Heart left ventricle (tissue), 16 donors: ENCODE measurements at regions of chr17 and their contacts with region 1.

Region 1: DNA sequence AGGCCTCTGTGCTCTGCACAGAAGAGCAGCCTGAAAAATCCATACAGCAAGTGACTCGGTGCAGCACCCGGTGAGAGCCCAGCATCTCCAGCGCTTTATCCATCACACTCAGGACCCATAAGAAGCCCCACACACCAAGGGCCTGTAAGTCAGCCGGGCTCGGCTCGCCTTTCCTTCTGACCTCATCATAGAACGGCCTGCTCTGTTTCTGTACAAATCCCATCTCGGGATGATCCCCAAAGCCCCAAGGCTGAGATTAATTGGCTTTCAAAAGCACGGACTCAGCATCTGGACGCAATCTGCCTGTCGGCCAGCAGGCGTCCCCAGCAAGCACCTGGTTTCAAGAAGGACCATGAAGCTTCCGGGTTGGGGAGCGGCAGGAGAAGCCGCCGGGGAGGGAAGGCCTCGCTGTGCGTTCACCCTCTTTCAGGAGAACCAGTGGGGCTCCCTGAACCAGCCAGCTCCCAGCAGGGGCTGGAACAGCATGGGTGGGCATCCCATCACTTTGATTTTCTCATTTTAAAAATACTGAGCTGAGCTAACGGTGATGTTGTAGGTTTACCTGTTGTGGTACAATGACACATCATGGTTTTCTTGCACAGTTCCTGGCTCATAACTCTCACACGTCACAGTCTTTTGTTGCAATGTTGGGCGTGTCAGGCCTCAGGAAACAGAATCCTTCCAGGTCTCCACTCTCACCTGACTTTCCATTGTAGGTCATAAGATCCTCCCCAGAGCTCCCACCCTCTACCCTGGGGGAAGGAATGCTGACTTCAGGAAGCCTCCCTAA is 6.7 kb downstream of the CCDC57 start:
- DNase-seq: peak; percentile 81 to 91 (median 84)
- ATAC-seq: peak; percentile 57 to 87 (median 86)
- H3K4me3 ChIP-seq: peak overlapping the region in 7 of 12 donors; percentile 11 to 41 (median 17)
- H3K27ac ChIP-seq: peak overlapping the region in 11 of 12 donors; percentile 15 to 86 (median 48)
- H3K4me1 ChIP-seq: peaks cover 0 to 19% (median 8%) of the 10 kb centered on the region in 12 donors
- H3K27me3 ChIP-seq: no peaks in the 10 kb centered on the region
- CTCF ChIP-seq: peak; percentile 79 to 95 (median 92)
- POLR2A ChIP-seq: no peak

Region 2: DNA sequence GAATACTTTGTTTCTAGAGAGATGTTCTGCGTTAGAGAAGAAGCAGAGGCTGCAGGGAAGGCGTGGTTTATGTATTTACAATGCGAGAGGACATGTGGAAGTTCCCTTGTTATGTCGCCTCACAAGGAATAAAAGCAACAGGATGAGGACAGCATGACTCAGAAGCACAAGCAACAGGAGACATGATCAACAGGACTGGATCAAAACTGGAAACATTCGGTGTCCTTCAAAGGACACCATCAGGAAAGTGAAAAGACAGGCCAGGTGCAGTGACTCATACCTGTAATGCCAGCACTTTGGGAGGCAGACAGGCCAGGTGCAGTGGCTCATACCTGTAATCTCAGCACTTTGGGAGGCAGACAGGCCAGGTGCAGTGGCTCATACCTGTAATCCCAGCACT is 45.8 kb before region 1 on chr17:
- intact Hi-C with region 1: no loop called
- DNase-seq: no peak
- ATAC-seq: no peak
- H3K4me3 ChIP-seq: no peak overlapping the region
- H3K27ac ChIP-seq: no peak overlapping the region
- H3K4me1 ChIP-seq: no peaks in the 10 kb centered on the region
- H3K27me3 ChIP-seq: no peaks in the 10 kb centered on the region
- CTCF ChIP-seq: no peak
- POLR2A ChIP-seq: no peak

Region 3: GRCh38 chr17:82230627-82231311 is 24.9 kb after region 1 on chr17:
- intact Hi-C with region 1: loop called in 1 of 10 experiments (anchors 2 kb)
- DNase-seq: peak; percentile 90 to 95 (median 91)
- ATAC-seq: peak; percentile 57 to 78 (median 74)
- H3K4me3 ChIP-seq: peak overlapping the region; percentile 32 to 93 (median 72)
- H3K27ac ChIP-seq: peak overlapping the region; percentile 85 to 99 (median 93)
- H3K4me1 ChIP-seq: peaks cover 0 to 69% (median 37%) of the 10 kb centered on the region in 12 donors
- H3K27me3 ChIP-seq: peaks cover 0 to 6% (median 0%) of the 10 kb centered on the region in 9 donors
- CTCF ChIP-seq: peak; percentile 37 to 79 (median 62)
- POLR2A ChIP-seq: peak in 1 of 2 donors; percentile 29

Region 4: GRCh38 chr17:82400830-82401229 is 194.9 kb after region 1 on chr17:
- intact Hi-C with region 1: loop called in 1 of 10 experiments (anchors 10 kb)
- DNase-seq: peak in 4 of 5 donors; percentile 48 to 82 (median 58)
- ATAC-seq: peak in 2 of 4 donors; percentile 40 to 55
- H3K4me3 ChIP-seq: peak overlapping the region in 1 of 12 donors; percentile 21
- H3K27ac ChIP-seq: peak overlapping the region in 1 of 12 donors; percentile 80
- H3K4me1 ChIP-seq: peaks cover 0 to 27% (median 1%) of the 10 kb centered on the region in 12 donors
- H3K27me3 ChIP-seq: no peaks in the 10 kb centered on the region
- CTCF ChIP-seq: no peak
- POLR2A ChIP-seq: no peak

Region 5: GRCh38 chr17:82424001-82424862 is 218.3 kb after region 1 on chr17:
- intact Hi-C with region 1: loop called in 1 of 10 experiments (anchors 10 kb)
- DNase-seq: peak in 1 of 5 donors; percentile 25
- ATAC-seq: peak in 1 of 4 donors; percentile 22
- H3K4me3 ChIP-seq: no peak overlapping the region
- H3K27ac ChIP-seq: no peak overlapping the region
- H3K4me1 ChIP-seq: peaks cover 0 to 12% (median 1%) of the 10 kb centered on the region in 12 donors
- H3K27me3 ChIP-seq: no peaks in the 10 kb centered on the region
- CTCF ChIP-seq: peak in 11 of 12 donors; percentile 24 to 56 (median 46)
- POLR2A ChIP-seq: no peak